ENCODE measurements at regions of chr4 and their contacts with region 1.

Region 1: GRCh38 chr4:35166466-35166865 is 1077.8 kb downstream of the ARAP2 start:
- DNase-seq: no peak
- ATAC-seq: no peak
- H3K4me3 ChIP-seq: no peak overlapping the region
- H3K27ac ChIP-seq: no peak overlapping the region
- H3K4me1 ChIP-seq: no peaks in the 10 kb centered on the region
- H3K27me3 ChIP-seq: no peaks in the 10 kb centered on the region
- CTCF ChIP-seq: no peak
- EP300 ChIP-seq: no peak
- POLR2A ChIP-seq: no peak
- RAD21 ChIP-seq: no peak

Region 2: DNA sequence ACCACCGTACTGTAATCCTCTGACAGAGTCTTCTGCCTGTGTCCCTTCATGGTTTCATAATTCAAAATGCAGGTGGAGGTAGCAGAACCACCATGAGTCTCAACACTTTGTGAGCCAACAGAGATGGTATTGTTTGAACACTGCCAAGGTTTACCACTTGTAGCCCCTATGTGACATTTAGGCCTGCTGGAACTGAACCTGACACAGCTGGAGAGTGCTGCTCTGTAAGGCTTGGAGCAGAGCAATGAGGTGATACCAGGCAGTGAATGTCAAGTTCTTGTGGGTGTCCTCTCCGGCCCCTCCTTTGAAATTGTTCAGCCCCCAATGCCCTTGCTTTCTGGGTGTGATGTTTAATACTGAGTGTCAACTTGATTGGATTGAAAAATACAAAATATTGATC is 34.9 kb after region 1 on chr4:
- CTCF ChIA-PET with region 1: no interaction called
- POLR2A ChIA-PET with region 1: no interaction called
- RAD21 ChIA-PET with region 1: interaction called, 3 read pairs
- SMC1A ChIA-PET with region 1: interaction called, 14 read pairs
- in situ Hi-C with region 1: no loop called
- intact Hi-C with region 1: no loop called
- DNase-seq: no peak
- ATAC-seq: no peak
- H3K4me3 ChIP-seq: no peak overlapping the region
- H3K27ac ChIP-seq: no peak overlapping the region
- H3K4me1 ChIP-seq: no peaks in the 10 kb centered on the region
- H3K27me3 ChIP-seq: no peaks in the 10 kb centered on the region
- CTCF ChIP-seq: no peak
- EP300 ChIP-seq: no peak
- POLR2A ChIP-seq: no peak
- RAD21 ChIP-seq: no peak

Measured in GM12878 (cell line).